Activated CD4-positive, alpha-beta memory T cell treated with anti-CD3 and anti-CD28 coated beads for 36 hours (primary cell): ENCODE measurements at regions of chr11 and their contacts with region 1.

Region 1: GRCh38 chr11:127345819-127346459 is 345.4 kb upstream of the KIRREL3 start:
- DNase-seq: peak; percentile 16
- H3K4me3 Mint-ChIP-seq: no peak overlapping the region
- H3K27ac Mint-ChIP-seq: no peak overlapping the region
- H3K4me1 Mint-ChIP-seq: no peaks in the 10 kb centered on the region
- H3K27me3 Mint-ChIP-seq: no peaks in the 10 kb centered on the region

Region 2: GRCh38 chr11:126440792-126441514 is 905.0 kb before region 1 on chr11:
- CTCF ChIA-PET with region 1: interaction called, 4 read pairs
- POLR2A ChIA-PET with region 1: no interaction called
- intact Hi-C with region 1: loop called (anchors 5 kb)
- DNase-seq: peak; percentile 81
- H3K4me3 Mint-ChIP-seq: no peak overlapping the region
- H3K27ac Mint-ChIP-seq: no peak overlapping the region
- H3K4me1 Mint-ChIP-seq: no peaks in the 10 kb centered on the region
- H3K27me3 Mint-ChIP-seq: peaks cover 12% of the 10 kb centered on the region